CD14-positive monocyte (primary cell): ENCODE measurements at regions of chr1 and their contacts with region 1.

Region 1: DNA sequence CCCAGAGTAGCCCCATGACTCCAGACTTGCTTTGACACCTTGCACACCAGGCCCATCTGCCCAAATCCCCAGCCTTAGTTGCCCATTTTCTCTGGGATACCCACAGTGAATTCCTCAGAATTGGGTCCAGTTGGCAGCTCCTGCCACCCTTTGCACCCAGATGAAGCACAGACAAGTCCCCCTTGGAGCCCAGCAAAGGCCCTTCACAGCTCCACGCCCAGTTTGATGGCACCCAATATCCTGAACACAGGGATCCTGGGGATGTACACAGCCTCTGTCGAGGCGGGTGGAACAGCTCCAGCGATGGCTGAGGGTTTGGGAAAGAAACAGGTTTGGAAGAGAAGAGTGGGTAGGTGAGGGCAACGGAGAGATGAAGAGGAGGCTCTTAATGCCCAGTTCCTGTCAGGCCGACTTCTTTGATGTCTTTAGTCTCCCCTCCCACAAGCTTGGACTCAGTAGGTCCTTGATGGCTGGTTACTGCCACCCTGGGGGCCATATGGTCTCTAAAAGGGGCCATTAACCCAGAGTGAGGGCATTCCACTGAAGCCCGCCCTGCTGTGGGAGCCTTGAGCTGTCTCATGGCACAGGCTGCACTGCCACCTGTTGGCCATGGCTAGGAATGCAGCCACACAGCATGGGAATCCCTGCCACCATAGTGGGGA is 21.7 kb downstream of the TMEM53 start:
- DNase-seq: peak; percentile 52 to 64 (median 60)
- H3K4me3 ChIP-seq: no peak overlapping the region
- H3K4me3 Mint-ChIP-seq: no peak overlapping the region
- H3K27ac ChIP-seq: peak overlapping the region; percentile 5 to 59
- H3K27ac Mint-ChIP-seq: peak overlapping the region in 6 of 7 donors; percentile 33 to 82 (median 68)
- H3K4me1 ChIP-seq: no peaks in the 10 kb centered on the region
- H3K4me1 Mint-ChIP-seq: peaks cover 2% of the 10 kb centered on the region
- H3K27me3 ChIP-seq: no peaks in the 10 kb centered on the region
- H3K27me3 Mint-ChIP-seq: peaks cover 0 to 2% (median 0%) of the 10 kb centered on the region in 3 donors
- CTCF ChIP-seq: peak; percentile 95

Region 2: GRCh38 chr1:44377925-44378784 is 274.4 kb before region 1 on chr1:
- intact Hi-C with region 1: loop called (anchors 5 kb)
- DNase-seq: peak; percentile 47 to 68 (median 65)
- H3K4me3 ChIP-seq: no peak overlapping the region
- H3K4me3 Mint-ChIP-seq: no peak overlapping the region
- H3K27ac ChIP-seq: no peak overlapping the region
- H3K27ac Mint-ChIP-seq: no peak overlapping the region
- H3K4me1 ChIP-seq: no peaks in the 10 kb centered on the region
- H3K4me1 Mint-ChIP-seq: no peaks in the 10 kb centered on the region
- H3K27me3 ChIP-seq: no peaks in the 10 kb centered on the region
- H3K27me3 Mint-ChIP-seq: peaks cover 0 to 3% (median 0%) of the 10 kb centered on the region in 3 donors
- CTCF ChIP-seq: peak; percentile 88

Region 3: DNA sequence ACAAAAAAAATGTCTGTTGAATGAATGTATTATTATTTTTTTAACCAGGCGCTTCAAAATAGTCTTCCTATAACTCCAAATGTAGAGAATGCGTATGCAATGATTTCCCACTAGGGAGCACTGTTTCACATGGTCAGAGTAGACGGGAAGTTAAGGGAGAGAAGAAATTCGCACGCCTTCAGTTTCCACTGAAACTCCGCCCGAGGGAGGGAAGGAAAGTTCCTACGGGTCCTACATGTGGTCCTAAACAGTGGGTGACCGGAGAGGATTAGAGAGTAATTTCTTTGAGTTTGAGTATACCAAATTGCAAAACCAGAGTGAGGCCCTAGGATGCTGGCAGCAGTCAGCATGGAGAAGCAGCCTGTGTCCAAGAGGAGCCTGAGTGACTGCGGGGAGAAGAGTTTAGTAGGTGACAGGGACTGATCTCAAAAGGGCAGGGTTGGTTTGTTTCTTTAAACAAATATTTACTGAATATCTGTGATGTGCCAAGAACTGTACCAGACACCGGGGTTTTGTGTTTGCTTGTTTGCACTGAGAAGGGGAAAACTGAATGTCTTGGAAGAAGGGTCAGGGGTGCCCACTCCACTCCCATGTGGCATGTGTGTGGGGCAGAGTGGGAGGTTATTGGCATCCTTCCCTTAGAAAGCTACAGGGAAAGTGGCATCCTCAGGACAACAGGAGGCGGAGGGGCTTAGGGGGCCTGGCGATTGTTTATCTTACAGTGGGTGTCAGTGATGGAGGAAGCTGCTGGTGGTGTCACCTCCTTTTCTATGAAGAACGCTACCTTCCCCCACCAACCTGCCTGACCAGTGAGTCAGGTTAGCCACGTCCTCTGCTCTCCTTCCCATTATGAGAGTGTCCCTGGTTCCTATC is 55.6 kb after region 1 on chr1:
- intact Hi-C with region 1: loop called in 1 of 2 experiments (anchors 5 kb)
- DNase-seq: peak; percentile 43 to 73 (median 59)
- H3K4me3 ChIP-seq: peak overlapping the region in 1 of 3 experiments; percentile 40
- H3K4me3 Mint-ChIP-seq: peak overlapping the region; percentile 61 to 89
- H3K27ac ChIP-seq: no peak overlapping the region
- H3K27ac Mint-ChIP-seq: peak overlapping the region in 2 of 7 donors; percentile 35 to 81
- H3K4me1 ChIP-seq: peaks cover 5 to 8% of the 10 kb centered on the region in 2 donors
- H3K4me1 Mint-ChIP-seq: peaks cover 6% of the 10 kb centered on the region
- H3K27me3 ChIP-seq: peaks cover 0 to 14% of the 10 kb centered on the region in 2 donors
- H3K27me3 Mint-ChIP-seq: peaks cover 14 to 31% (median 20%) of the 10 kb centered on the region in 3 donors
- CTCF ChIP-seq: peak; percentile 80